ENCODE measurements at regions of chr10 and their contacts with region 1.

Region 1: DNA sequence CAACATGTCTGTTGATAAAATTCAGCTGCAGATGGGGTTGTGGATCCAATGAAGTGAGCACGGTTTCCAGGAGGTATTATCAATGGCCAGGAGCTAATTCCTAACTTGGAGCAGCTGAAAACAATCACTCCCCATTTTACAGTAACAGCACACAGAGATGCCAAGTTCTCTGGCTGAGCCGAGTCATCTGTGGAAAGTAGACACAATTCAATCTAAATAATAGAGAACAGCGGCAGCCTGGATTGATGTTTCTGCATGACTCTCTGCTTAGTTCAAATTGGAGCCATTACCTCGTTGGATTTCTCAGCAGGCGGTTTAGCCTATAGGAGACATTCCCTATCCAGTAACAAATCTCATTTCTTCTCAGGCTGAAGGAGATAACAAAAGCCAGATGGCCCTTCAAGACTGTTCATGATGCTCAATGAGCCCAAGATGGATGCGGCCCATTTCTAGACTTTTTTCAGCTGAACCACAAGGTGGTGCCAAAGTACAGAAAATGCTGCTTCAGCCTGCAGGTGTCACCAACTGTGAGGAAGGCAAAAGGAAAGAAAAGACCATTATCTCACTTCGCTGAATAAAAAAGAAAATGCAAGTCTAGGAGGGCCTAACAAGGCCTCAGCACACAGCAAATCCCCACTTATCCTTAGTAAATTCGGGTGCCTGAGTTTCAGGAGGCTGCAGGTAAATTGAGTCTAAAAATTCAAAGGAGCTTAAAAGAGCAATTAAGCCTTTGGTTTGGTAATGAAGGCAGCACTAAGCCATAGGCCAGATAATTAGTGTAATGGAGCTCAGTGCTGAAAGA is 83.7 kb downstream of the SLC16A9 start:
- DNase-seq: peak; percentile 49
- H3K4me3 Mint-ChIP-seq: no peak overlapping the region
- H3K27ac Mint-ChIP-seq: no peak overlapping the region
- H3K4me1 Mint-ChIP-seq: peaks cover 3% of the 10 kb centered on the region
- H3K27me3 Mint-ChIP-seq: peaks cover 20% of the 10 kb centered on the region

Region 2: GRCh38 chr10:59508296-59508695 is 117.6 kb before region 1 on chr10:
- CTCF ChIA-PET with region 1: no interaction called
- POLR2A ChIA-PET with region 1: no interaction called
- DNase-seq: no peak
- H3K4me3 Mint-ChIP-seq: no peak overlapping the region
- H3K27ac Mint-ChIP-seq: no peak overlapping the region
- H3K4me1 Mint-ChIP-seq: no peaks in the 10 kb centered on the region
- H3K27me3 Mint-ChIP-seq: no peaks in the 10 kb centered on the region

Region 3: GRCh38 chr10:59606551-59606961 is 19.4 kb before region 1 on chr10:
- CTCF ChIA-PET with region 1: interaction called, 11 read pairs
- POLR2A ChIA-PET with region 1: no interaction called
- DNase-seq: no peak
- H3K4me3 Mint-ChIP-seq: no peak overlapping the region
- H3K27ac Mint-ChIP-seq: no peak overlapping the region
- H3K4me1 Mint-ChIP-seq: no peaks in the 10 kb centered on the region
- H3K27me3 Mint-ChIP-seq: peaks cover 10% of the 10 kb centered on the region

Region 4: GRCh38 chr10:59808896-59809643 is 183.1 kb after region 1 on chr10:
- CTCF ChIA-PET with region 1: interaction called, 27 read pairs
- POLR2A ChIA-PET with region 1: no interaction called
- DNase-seq: peak; percentile 79
- H3K4me3 Mint-ChIP-seq: no peak overlapping the region
- H3K27ac Mint-ChIP-seq: no peak overlapping the region
- H3K4me1 Mint-ChIP-seq: peaks cover 3% of the 10 kb centered on the region
- H3K27me3 Mint-ChIP-seq: no peaks in the 10 kb centered on the region